ENCODE measurements at regions of chr10 and their contacts with region 1.

Region 1: DNA sequence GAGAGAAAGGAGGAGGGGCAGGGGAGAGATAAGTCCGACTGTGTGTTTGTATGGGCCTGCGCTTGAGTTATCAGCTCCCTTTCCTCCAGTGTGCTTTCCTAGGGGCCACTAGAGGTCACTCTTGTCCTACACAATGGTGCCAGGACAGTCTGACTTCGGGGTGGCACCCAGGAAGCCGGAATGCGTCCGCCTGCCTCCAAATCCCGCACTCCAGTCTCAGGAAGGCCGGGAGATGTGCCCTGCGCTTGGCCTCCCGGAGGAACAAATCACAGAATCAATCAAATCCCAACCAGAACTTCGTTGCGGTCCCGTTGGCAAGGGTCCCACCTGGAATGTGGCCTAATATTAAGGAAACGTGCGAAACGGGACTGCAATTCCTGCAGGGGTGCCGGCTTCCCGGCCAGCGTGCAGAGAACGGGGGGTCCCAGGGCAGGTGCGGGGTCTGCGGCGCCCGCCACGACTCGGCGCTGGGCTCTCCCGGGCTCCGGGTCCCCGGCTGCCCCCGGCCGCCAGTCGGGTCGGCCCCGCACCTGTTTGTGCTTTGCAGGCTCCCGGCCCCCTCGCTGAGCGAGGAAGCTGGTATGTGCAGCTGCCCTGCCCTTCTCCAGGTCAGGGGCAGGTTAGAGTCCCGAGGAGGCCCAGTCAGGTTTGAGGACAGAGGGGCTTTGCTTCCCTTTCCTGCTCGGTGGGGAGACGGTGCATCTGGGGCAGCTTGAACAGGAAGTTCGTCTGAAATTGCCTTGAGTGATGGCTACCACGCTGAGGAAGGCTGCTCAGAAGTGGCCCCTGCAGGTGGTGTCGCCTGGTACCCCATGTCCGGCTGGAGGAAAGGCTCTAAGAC is 21.0 kb upstream of the HPS1 start:
- ATAC-seq: peak; percentile 97 to 99 (median 98)
- H3K4me3 ChIP-seq: peak overlapping the region; percentile 8 to 24 (median 22)
- H3K27ac ChIP-seq: no peak overlapping the region
- H3K4me1 ChIP-seq: peaks cover 4 to 11% of the 10 kb centered on the region in 2 donors

Region 2: GRCh38 chr10:98309366-98310355 is 158.1 kb before region 1 on chr10:
- in situ Hi-C with region 1: no loop called
- ATAC-seq: peak; percentile 79 to 92 (median 86)
- H3K4me3 ChIP-seq: peak overlapping the region in 1 of 5 donors; percentile 18
- H3K27ac ChIP-seq: peak overlapping the region; percentile 66 to 88
- H3K4me1 ChIP-seq: peaks cover 18 to 34% of the 10 kb centered on the region in 2 donors

Region 3: GRCh38 chr10:99234041-99234790 is 766.5 kb after region 1 on chr10:
- in situ Hi-C with region 1: loop called in 4 of 9 experiments (anchors 25 kb)
- ATAC-seq: peak in 7 of 8 experiments; percentile 37 to 85 (median 64)
- H3K4me3 ChIP-seq: peak overlapping the region in 1 of 5 donors; percentile 2
- H3K27ac ChIP-seq: no peak overlapping the region
- H3K4me1 ChIP-seq: peaks cover 0 to 18% of the 10 kb centered on the region in 2 donors

Region 4: GRCh38 chr10:99248824-99249223 is 781.1 kb after region 1 on chr10:
- in situ Hi-C with region 1: loop called in 5 of 9 experiments (anchors 10 to 25 kb)
- ATAC-seq: no peak
- H3K4me3 ChIP-seq: no peak overlapping the region
- H3K27ac ChIP-seq: no peak overlapping the region
- H3K4me1 ChIP-seq: no peaks in the 10 kb centered on the region

Measured in motor neuron (in vitro differentiated cells).